ENCODE measurements at regions of chr10 and their contacts with region 1.

Region 1: GRCh38 chr10:7818295-7819122 is at the start of gene TAF3:
- DNase-seq: peak; percentile 95 to 97
- ATAC-seq: peak; percentile 96
- H3K4me3 ChIP-seq: peak within 1 kb of the TSS; percentile 87 to 93
- H3K27ac ChIP-seq: peak within 1 kb of the TSS in 1 of 2 donors; percentile 65
- H3K4me1 ChIP-seq: no peaks in the 10 kb centered on the region
- H3K27me3 ChIP-seq: no peaks in the 10 kb centered on the region
- total RNA-seq, gene TAF3: 10.5 to 11.4 TPM

Region 2: GRCh38 chr10:7525314-7526016 is 293.0 kb before region 1 on chr10:
- intact Hi-C with region 1: loop called in 1 of 2 experiments (anchors 10 kb)
- DNase-seq: no peak
- ATAC-seq: peak; percentile 78
- H3K4me3 ChIP-seq: no peak overlapping the region
- H3K27ac ChIP-seq: no peak overlapping the region
- H3K4me1 ChIP-seq: no peaks in the 10 kb centered on the region
- H3K27me3 ChIP-seq: no peaks in the 10 kb centered on the region

Region 3: DNA sequence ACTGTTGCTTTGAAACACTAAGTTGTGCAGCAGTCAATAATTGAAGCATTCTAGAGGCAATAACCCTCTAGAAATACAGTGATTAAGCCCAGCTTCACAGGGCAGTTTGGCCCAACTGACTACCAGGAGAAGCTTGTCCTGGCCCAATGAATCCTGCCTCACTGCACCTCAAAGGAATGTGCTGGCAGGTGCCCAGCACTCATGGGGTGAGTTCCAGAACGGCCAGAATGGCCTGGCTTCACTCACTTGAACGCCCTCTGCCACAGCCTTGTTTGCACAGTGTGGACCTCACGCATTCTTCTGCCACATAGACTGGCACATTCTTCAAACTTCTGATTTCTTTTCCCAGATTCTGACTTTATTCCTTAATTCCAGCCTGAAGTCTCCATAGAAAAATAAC is 122.0 kb before region 1 on chr10:
- intact Hi-C with region 1: loop called in 1 of 2 experiments (anchors 10 kb)
- DNase-seq: peak; percentile 71 to 86
- ATAC-seq: peak; percentile 54
- H3K4me3 ChIP-seq: no peak overlapping the region
- H3K27ac ChIP-seq: peak overlapping the region in 1 of 2 donors; percentile 94
- H3K4me1 ChIP-seq: peaks cover 0 to 8% of the 10 kb centered on the region in 2 donors
- H3K27me3 ChIP-seq: no peaks in the 10 kb centered on the region

Region 4: DNA sequence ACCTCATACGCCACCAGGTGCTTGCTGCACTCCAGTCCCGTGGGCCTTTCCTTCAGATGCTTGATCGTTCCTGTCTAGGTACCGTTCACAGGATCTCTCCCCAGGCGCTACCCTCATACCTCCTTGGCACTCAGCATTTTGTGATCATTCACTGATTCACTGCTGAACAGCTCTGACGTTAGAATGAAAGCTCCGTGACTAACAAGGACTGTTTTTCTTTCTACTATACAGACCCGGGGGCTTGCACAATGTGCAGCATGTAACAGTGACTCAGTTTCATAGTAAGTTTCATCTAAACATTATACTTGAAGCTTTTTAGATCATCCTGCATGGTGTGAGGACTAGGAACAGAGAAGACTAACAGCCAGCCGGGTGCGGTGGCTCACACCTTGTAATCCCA is 51.3 kb before region 1 on chr10:
- intact Hi-C with region 1: no loop called
- DNase-seq: no peak
- ATAC-seq: no peak
- H3K4me3 ChIP-seq: no peak overlapping the region
- H3K27ac ChIP-seq: no peak overlapping the region
- H3K4me1 ChIP-seq: no peaks in the 10 kb centered on the region
- H3K27me3 ChIP-seq: no peaks in the 10 kb centered on the region

Region 5: DNA sequence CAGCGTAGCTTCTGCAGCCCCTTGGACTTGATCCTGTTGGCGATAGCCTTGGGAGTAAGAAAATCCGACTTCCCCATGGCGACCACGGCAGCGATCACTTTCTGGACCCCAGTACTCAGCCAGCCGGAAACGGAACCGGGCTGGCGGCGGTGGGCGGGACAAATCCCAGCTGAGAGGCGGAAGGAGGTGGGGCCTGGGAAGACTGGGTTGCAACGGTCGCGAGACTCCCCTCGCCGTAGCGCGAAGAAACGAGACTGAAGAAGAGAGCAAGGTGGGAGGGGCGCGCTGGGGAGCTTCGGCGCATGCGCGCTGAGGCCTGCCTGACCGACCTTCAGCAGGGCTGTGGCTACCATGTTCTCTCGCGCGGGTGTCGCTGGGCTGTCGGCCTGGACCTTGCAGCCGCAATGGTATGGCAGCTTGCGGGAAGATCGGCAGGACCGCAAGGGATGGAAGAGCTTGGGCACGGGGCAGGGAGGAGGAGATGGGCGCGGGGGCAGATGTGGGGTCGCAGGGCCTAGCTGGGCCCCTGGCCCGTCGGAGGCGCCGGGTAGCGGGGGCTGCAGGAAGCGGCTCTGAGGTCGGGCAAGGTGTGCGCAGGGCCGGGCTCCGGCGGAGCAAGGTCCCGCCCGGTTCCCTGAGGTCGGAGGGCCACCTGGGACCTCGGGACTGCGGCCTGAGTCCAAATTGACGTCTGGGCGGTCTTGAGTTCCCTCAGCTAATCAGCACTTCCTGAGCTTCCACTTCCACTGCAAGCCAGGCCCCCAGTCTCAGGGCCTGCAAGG is 30.5 kb before region 1 on chr10 and contains the starts of genes ATP5F1C and KIN:
- intact Hi-C with region 1: loop called (anchors 1 to 2 kb)
- DNase-seq: peak; percentile 99
- ATAC-seq: peak; percentile 100
- H3K4me3 ChIP-seq: peak within 1 kb of the TSS; percentile 76 to 92
- H3K27ac ChIP-seq: peak within 1 kb of the TSS in 1 of 2 donors; percentile 16
- H3K4me1 ChIP-seq: peaks cover 0 to 3% of the 10 kb centered on the region in 2 donors
- H3K27me3 ChIP-seq: no peaks in the 10 kb centered on the region
- total RNA-seq, gene ATP5F1C: 133 to 137 TPM
- total RNA-seq, gene KIN: 13.4 TPM

Measured in aorta (tissue), 5 donors.